HEK293 (cell line): ENCODE measurements at regions of chr1 and their contacts with region 1.

Region 1: GRCh38 chr1:23664837-23665795 is 26.5 kb upstream of the RPL11 start:
- H3K4me3 ChIP-seq: no peak overlapping the region
- H3K27ac ChIP-seq: no peak overlapping the region
- H3K4me1 ChIP-seq: no peaks in the 10 kb centered on the region
- CTCF ChIP-seq: peak; percentile 47

Region 2: GRCh38 chr1:23539698-23540266 is 125.3 kb before region 1 on chr1:
- CTCF ChIA-PET with region 1: interaction called, 68 read pairs
- POLR2A ChIA-PET with region 1: no interaction called
- H3K4me3 ChIP-seq: no peak overlapping the region
- H3K27ac ChIP-seq: no peak overlapping the region
- H3K4me1 ChIP-seq: no peaks in the 10 kb centered on the region
- CTCF ChIP-seq: peak; percentile 95

Region 3: DNA sequence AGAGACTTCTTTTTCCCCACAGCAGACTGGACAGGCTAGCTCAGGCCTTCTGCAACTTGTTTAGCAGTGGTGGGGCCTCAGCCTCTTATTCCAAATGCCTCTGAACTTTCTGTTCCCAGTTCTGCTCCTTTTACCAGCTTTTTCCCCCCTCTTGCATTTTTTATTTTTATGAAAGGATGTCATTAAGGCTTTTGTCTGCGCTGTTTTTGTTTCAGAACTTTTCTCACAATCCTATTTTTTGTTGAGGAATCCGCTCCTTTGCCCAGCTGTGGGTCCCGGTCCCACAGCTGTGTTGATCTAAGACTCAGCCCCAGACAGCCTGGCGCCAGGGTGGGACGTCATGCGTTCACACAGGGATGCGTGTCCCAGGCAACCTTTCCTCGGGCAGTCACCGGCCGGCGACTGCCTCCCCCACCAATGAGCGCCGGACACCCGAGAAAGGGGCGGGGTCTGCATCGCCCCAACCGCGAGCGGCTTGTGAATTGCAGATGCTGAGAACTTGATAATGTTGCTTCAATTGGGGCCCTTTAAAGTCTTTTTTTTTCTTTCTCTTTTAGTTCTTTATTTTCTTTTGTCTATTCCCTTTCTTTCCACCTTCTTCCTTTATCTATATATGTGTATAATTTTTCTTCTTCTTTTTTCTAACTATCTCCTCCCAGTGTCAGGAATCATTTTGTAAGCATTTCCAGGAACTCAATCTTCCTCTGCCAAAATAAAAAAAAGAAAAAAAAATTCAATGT is 102.8 kb before region 1 on chr1:
- CTCF ChIA-PET with region 1: no interaction called
- POLR2A ChIA-PET with region 1: no interaction called
- H3K4me3 ChIP-seq: no peak overlapping the region
- H3K27ac ChIP-seq: peak overlapping the region; percentile 89
- H3K4me1 ChIP-seq: peaks cover 19% of the 10 kb centered on the region
- CTCF ChIP-seq: no peak

Region 4: GRCh38 chr1:23643736-23644554 is 21.2 kb before region 1 on chr1:
- CTCF ChIA-PET with region 1: interaction called, 39 read pairs
- POLR2A ChIA-PET with region 1: no interaction called
- H3K4me3 ChIP-seq: no peak overlapping the region
- H3K27ac ChIP-seq: peak overlapping the region; percentile 37; the same call in 1 of the 2 replicates
- H3K4me1 ChIP-seq: peaks cover 14% of the 10 kb centered on the region
- CTCF ChIP-seq: no peak

Region 5: DNA sequence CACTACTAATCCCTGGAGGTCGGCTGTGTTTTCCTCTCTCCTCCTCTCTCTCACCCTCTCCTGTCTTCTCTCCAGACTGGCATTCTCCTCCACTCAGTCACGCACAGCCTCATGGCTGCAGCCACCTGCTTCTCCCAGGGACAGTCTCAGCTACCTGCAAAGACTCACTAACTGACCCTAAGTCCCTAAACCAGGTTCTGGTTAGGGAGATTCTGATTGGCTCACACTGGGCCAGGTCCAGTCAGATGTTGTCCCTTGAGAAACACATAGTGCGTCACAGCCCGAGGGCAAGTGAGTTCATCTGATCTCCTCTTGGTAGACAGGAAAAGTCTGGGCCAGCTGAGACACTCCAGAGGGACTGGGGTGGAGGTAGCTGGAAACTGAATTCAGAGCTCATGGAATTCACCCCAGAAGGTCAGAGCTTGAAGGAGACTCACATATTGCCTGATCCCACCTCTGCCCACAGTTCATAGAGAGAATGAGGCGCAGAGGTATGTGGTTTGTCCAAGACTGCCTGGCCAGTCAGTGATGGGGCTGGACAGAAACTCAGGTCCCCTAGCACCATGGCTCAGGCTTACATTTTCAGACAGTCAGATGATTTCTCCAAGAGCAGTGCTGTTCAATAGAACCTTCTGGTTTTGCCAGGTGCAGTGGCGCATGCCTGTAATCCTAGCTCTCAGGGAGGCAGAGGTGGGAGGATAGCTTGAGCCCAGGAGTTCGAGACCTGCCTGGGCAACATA is 13.9 kb before region 1 on chr1:
- CTCF ChIA-PET with region 1: interaction called, 72 read pairs
- POLR2A ChIA-PET with region 1: no interaction called
- H3K4me3 ChIP-seq: no peak overlapping the region
- H3K27ac ChIP-seq: no peak overlapping the region
- H3K4me1 ChIP-seq: peaks cover 4% of the 10 kb centered on the region; the same call in 1 of the 2 replicates
- CTCF ChIP-seq: no peak